ENCODE measurements at regions of chr11 and their contacts with region 1.

Region 1: DNA sequence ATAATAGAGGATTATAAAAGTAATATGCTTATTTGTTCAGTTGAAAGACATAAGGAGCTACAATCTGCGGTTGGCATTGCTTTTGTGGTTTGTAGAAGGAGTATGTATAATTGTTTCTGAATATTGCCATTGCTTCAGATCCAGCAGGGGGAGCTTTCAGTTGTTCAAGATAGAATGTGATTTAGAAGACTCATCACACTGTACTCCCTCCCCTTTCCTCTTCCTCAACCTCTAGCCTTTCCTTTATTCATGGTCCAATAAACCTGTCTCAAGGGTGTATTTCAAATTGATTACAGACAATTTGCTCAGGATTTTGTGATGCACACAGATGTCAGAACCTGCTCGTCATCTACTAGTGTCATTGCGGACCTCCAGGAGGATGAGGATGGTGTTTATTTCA is 9.8 kb downstream of the PRMT3 start:
- DNase-seq: no peak
- H3K4me3 Mint-ChIP-seq: no peak overlapping the region
- H3K27ac Mint-ChIP-seq: no peak overlapping the region
- H3K4me1 Mint-ChIP-seq: peaks cover 21% of the 10 kb centered on the region
- H3K27me3 Mint-ChIP-seq: no peaks in the 10 kb centered on the region

Region 2: GRCh38 chr11:20415432-20415831 is 18.2 kb after region 1 on chr11:
- intact Hi-C with region 1: loop called (anchors 2 kb)
- DNase-seq: no peak
- H3K4me3 Mint-ChIP-seq: no peak overlapping the region
- H3K27ac Mint-ChIP-seq: no peak overlapping the region
- H3K4me1 Mint-ChIP-seq: peaks cover 30% of the 10 kb centered on the region
- H3K27me3 Mint-ChIP-seq: no peaks in the 10 kb centered on the region

Region 3: DNA sequence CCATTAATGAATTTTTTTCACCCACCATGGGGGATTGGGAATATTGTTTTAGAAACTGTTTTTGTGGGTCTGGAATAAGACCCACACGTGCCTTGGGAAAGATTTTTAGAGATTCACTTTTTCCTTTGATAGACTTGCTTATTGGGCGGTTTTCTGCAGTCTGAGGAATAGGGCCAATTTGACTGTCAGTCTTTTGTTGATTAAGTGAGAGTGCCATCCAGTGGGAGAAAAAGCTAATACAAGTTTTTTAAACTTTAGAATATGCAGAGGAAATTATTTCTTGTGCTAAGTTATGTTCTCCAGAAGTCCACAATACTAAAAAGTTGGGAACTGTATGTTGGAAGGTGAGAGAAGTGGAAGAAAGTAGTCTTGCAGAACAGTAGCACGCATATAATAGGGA is 46.3 kb after region 1 on chr11:
- intact Hi-C with region 1: loop called (anchors 2 kb)
- DNase-seq: no peak
- H3K4me3 Mint-ChIP-seq: no peak overlapping the region
- H3K27ac Mint-ChIP-seq: no peak overlapping the region
- H3K4me1 Mint-ChIP-seq: peaks cover 4% of the 10 kb centered on the region
- H3K27me3 Mint-ChIP-seq: no peaks in the 10 kb centered on the region

Region 4: GRCh38 chr11:20467487-20468185 is 70.4 kb after region 1 on chr11:
- intact Hi-C with region 1: no loop called
- DNase-seq: no peak
- H3K4me3 Mint-ChIP-seq: no peak overlapping the region
- H3K27ac Mint-ChIP-seq: no peak overlapping the region
- H3K4me1 Mint-ChIP-seq: peaks cover 5% of the 10 kb centered on the region
- H3K27me3 Mint-ChIP-seq: no peaks in the 10 kb centered on the region

Region 5: DNA sequence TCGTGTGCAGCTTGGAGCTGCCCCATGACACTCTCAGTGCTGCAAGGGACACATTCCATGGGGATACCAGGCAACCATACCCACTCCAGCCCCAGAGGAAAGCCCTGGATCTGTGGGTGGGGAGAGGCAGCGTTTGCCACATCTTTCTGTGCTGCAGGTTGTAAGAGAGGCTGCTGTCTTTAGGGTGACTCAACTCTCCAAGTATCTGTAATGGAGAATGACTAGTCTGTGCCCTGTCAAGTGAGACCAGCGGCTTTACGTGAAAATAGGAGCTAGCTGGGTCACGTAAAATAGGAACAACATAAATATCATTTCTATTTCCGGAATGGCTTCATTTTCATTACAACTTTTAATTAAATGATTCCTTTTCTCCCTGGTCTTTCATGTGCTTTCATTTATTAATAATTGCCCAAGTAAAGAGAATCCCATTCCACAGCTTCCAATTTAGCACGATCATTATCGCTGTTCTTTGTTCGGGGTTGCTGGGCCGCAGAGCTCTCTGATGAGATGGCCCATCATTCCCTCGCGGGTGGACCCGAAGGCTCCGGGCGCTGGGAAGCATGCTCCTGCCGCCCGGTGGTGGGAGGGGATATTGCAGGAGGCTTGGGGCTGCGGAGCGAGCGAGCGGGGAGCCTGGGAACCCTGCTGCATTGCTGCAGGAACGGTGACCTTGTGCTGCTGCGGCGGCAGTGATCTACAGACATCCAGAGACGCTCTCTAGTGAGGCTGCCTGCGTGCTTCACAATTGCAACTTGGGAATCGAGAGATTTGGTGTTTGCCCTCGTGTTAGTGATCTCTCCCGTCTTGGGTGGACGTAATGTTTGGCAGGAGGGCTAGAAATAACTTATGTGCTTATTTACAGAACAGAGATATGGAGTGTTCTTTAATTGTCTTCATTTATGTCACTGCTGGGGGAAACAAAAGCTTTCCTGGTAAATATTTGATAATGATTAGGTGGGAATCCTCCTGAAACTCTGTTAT is 212.7 kb after region 1 on chr11:
- intact Hi-C with region 1: loop called (anchors 1 kb)
- DNase-seq: peak; percentile 49
- H3K4me3 Mint-ChIP-seq: peak overlapping the region; percentile 54
- H3K27ac Mint-ChIP-seq: no peak overlapping the region
- H3K4me1 Mint-ChIP-seq: peaks cover 6% of the 10 kb centered on the region
- H3K27me3 Mint-ChIP-seq: peaks cover 68% of the 10 kb centered on the region

Measured in activated T-helper 2 cell treated with anti-CD3 and anti-CD28 coated beads, Interferon-gamma antibody, Interleukin-2, Interleukin-4, amounts not matched to agents 10 μg/mL and 5 μg/mL and 100 μg/mL, durations not matched to agents 14 hours and 24 hours and 36 hours (primary cell).